BJ (cell line): ENCODE measurements at regions of chr16 and their contacts with region 1.

Region 1: DNA sequence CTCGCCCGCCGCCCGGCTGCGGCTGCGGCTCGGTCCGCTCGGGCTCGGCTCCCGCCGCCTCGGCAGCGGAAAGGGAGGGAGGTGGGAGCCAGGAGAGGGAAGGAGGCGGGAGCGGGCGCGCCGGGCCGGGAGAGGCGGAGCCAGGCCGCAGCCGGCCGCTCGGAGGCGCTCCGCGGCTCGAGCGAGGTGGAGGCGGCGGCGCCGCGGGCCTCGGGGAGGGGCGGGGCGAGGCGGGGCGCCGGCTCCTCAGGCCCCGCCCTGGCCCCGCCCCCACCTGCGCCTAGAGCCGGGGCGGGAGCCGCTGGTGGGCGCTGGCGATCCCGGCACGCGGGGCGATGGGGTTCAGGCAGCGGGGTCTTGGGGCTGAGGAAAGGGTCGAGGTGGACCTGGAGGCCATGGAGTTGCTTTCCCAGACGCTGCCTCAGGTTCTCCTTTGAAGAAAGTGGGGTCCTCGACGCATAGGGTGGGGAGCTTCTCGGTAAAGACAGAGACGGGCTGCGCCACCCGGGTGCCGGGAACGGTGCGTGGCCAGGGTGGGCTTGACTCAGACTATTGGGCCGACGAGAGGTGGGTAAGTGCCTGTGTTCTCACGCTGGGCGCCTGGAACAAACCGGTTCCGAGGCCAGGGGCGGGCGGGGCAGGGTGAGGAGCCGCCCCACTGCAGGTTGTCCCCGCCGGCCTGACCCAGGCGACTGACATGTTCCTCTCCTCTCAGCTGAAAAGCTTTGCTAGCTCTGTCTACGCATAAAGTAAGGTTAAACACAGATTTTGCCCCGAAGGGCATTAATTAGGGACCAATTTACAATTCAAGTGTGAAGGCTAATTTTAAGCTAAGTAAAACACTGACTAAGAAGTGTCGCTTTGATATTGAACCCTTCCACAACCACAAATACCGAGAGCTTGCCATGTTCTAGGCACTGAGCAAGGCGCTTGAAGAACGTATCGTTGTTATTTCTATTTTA is at the start of gene CMTM4:
- DNase-seq: peak; percentile 34
- H3K4me3 ChIP-seq: peak within 1 kb of the TSS; percentile 61
- H3K27me3 ChIP-seq: no peaks in the 10 kb centered on the region
- CTCF ChIP-seq: peak; percentile 30; the same call in 1 of the 2 replicates
- polyA plus RNA-seq, gene CMTM4: 24.8 and 28.0 TPM in 2 replicates

Region 2: GRCh38 chr16:66717112-66717675 is 20.2 kb after region 1 on chr16:
- CTCF ChIA-PET with region 1: interaction called, 12 read pairs
- POLR2A ChIA-PET with region 1: no interaction called
- DNase-seq: no peak
- H3K4me3 ChIP-seq: no peak overlapping the region
- H3K27me3 ChIP-seq: no peaks in the 10 kb centered on the region
- CTCF ChIP-seq: peak; percentile 73